HEK293T (cell line): ENCODE measurements at regions of chr17 and their contacts with region 1.

Region 1: DNA sequence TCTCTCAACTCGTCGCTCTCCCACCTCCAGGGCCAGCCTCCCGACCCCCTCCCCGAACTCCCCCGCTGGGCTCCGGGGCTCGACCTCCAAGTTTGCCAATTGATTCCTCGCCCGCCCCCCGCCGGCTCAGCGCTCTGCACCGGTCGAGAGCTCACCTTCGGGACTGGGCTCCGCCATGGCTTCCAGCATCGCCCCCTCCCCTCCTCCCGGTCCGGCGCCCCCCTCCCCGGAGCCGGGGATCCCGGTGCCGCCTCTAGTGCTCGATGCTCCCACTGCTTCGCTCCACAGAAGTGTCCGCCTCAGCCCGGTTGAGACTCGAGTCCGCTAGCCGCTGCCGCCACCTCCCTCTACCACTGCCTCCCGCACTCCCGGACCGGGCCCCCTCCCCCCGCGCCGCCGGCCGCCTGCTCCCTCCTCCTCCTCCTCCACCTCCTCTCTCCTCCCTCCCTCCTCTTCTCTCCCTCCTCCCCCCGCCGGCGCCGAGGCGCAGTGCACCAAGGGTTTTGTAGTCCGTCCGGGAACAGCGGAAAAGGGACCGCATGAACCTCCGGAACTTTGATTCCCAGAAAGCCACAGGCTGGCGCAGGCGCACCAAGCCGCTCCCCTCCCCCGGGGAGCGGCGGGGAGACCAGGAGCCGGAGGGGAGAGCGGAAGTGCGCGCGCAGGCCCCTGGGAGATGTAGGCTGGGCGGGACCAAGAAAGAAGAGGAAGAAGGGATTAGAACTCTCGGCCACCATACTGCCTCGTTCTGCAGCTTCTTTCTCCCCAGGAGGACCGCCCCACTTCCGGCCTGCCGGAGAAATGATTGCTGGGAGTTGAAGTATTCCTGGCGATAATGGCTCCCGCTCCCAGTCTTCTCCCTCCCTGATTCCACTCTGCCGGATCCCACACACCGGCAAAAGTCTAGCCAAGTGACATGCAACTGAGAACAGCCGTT is at the start of gene PHF23:
- DNase-seq: peak; percentile 96

Region 2: DNA sequence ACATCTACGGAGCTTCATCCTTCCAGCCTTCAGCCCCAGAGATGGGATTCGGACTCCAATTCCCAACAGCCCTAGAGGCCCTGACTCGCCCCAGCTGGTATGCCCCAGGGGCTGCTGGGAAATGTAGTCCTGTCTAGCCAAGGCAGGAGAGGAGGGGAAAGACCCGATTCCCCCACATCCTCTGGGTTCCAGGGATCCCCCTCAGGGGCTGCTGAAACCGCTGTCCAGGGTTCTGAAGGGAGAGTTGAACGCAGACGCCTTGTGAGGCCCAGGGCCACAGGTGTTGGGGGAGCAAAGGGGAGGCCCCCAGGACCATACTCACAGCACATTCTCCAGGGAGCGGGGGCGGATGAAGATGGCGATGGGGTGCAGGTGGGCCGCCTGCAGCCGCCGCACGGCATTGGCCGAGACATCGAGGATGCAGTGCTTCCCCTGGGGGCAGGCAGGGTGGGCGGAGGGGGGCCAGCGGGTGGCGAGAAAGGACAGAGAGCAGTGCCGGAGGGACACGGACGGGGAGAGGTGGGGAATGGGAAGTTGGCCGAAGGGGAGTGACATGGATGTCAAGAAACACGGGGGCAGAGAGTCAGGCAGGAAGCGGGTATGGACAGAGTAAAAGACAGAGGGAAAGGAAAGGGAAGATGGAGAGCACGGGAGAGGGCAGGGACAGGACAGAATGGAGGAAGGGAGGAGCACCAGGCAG is 47.6 kb before region 1 on chr17:
- CTCF ChIA-PET with region 1: no interaction called
- POLR2A ChIA-PET with region 1: no interaction called
- DNase-seq: peak; percentile 80

Region 3: GRCh38 chr17:7214300-7215135 is 24.8 kb before region 1 on chr17:
- CTCF ChIA-PET with region 1: no interaction called
- POLR2A ChIA-PET with region 1: interaction called, 166 read pairs
- DNase-seq: peak; percentile 96

Region 4: DNA sequence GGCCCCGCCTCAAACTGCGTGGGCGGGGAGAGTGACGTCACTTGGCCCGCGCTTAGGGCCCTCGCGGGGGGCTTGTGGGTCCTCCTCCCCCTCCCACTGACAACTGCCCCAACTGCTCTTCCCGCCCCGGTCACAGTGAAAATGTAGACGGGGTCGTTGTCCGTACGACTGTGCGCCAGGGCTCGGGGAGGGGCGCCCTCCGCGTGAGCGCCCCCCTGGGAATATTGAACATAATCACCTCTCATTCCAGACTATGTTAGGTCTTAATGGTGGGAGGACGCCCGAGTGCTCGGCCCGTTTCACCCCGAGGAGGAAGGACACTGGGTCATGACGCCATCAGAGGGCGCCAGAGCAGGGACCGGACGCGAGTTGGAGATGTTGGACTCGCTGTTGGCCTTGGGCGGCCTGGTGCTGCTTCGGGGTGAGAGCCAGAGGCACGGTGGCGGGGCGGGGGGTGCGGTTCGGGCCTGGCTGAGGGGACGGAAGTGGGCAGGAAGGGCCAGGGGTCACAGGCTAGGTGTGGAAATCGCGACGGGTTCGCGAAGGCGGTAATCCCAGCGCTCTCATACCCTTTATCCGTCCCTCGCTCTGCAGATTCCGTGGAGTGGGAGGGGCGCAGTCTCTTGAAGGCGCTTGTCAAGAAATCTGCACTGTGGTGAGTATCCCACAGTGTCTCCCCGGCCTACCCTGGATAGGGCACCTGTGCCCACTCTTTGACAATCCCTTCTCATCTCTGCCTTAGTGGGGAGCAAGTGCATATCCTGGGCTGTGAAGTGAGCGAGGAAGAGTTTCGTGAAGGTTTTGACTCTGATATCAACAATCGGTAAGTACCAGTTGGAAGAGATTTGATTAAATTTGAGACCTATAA is 13.1 kb after region 1 on chr17 and contains the start of gene ELP5:
- CTCF ChIA-PET with region 1: interaction called, 3 read pairs
- POLR2A ChIA-PET with region 1: interaction called, 52 read pairs
- DNase-seq: peak; percentile 90

Region 5: GRCh38 chr17:7289256-7290032 is 50.1 kb after region 1 on chr17:
- CTCF ChIA-PET with region 1: no interaction called
- POLR2A ChIA-PET with region 1: no interaction called
- DNase-seq: no peak